Cardiac septum (tissue), 1 donor: ENCODE measurements at regions of chr11 and their contacts with region 1.

Region 1: GRCh38 chr11:75592715-75593114 is 30.7 kb downstream of the SERPINH1 start:
- DNase-seq: no peak

Region 2: DNA sequence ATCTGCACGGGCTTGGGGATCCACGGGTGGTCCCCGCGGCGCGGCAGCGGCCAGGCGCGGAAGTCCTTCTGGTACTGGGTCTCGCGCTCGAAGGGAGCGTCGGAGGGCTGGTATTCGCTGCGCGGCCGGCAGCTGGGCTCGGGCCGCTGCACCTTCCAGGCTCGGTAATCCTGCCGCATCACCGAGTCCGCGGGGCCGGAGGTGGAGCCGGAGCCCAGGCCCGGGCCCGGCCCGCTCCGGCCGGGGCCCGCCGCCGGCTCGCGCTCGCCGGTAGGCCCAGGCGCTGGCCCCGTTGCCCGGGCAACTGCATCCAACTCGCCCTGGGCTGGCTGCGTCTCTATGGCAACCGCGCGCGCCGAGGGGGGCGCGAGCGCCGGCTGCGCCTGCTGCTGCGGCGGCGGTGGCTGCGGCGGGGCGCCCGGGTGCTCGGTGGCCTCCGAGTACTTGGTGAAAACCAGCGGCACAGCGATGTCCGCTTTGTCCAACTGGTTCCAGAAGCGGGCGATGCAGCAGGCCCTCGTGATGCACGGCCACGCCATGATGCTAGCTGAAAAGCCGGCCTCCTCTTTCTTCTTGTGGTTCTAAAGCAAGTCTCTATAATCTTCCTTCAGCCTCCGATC is 75.2 kb after region 1 on chr11:
- intact Hi-C with region 1: loop called (anchors 5 kb)
- DNase-seq: no peak